ENCODE measurements at regions of chr4 and their contacts with region 1.

Region 1: GRCh38 chr4:54050214-54050904 is 14.0 kb downstream of the CHIC2 start:
- DNase-seq: no peak
- H3K4me3 ChIP-seq: no peak overlapping the region
- CTCF ChIP-seq: no peak
- POLR2A ChIP-seq: no peak

Region 2: DNA sequence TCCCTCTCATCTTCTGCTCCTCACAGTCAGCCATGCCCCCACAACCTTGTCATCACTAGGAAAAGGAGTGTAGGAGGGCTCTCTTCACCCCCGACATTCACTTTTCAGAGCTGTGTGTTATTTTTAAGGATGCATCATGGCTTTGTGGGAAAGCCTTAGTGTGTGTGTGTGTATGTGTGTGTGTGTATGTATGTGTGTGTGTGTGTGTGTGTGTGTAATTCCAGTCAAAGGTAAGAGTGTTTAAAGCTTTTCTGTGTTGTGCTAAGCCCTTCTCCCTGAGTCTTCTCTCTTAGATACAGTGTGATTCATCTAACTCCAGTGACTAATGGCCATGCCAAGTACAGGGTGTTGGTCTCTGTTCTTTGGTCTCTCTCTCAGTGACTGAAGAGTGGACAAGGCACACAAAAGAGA is 62.6 kb before region 1 on chr4:
- intact Hi-C with region 1: loop called (anchors 2 kb)
- DNase-seq: no peak
- H3K4me3 ChIP-seq: no peak overlapping the region
- CTCF ChIP-seq: no peak
- POLR2A ChIP-seq: no peak